Activated naive CD4-positive, alpha-beta T cell treated with anti-CD3 and anti-CD28 coated beads for 36 hours (primary cell): ENCODE measurements at regions of chr6 and their contacts with region 1.

Region 1: DNA sequence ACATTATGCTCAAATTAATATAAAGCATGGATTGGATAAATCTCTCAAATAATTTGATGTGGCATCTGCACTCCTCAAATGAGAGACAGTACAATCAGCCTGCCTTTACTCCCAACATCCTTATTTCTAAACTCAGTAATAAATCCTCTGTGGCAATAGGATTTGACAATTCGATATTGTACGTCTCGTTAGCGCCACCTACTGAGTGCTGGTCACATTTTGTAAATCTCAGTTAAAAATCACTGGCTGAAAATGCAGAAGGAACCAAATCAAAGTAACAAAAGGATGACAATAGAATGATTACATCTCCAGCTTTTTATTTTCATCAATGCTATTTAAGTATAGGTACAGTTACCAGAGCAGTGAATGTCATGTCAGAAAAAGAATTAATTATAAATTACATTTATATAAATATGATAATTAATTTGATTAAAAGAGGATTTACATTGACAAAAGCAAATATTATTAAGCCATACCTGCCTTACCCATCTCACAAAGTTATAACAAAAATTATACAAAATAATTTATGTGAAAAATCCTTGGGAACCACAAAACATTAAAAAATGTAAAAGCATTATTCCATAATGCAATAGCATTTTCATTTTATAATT is 20.2 kb upstream of the GJE1 start:
- DNase-seq: peak; percentile 88
- H3K4me3 Mint-ChIP-seq: no peak overlapping the region
- H3K27ac Mint-ChIP-seq: no peak overlapping the region
- H3K4me1 Mint-ChIP-seq: no peaks in the 10 kb centered on the region
- H3K27me3 Mint-ChIP-seq: peaks cover 3% of the 10 kb centered on the region

Region 2: GRCh38 chr6:141594874-141595273 is 517.7 kb before region 1 on chr6:
- CTCF ChIA-PET with region 1: no interaction called
- intact Hi-C with region 1: loop called (anchors 2 kb)
- DNase-seq: no peak
- H3K4me3 Mint-ChIP-seq: no peak overlapping the region
- H3K27ac Mint-ChIP-seq: no peak overlapping the region
- H3K4me1 Mint-ChIP-seq: no peaks in the 10 kb centered on the region
- H3K27me3 Mint-ChIP-seq: no peaks in the 10 kb centered on the region

Region 3: DNA sequence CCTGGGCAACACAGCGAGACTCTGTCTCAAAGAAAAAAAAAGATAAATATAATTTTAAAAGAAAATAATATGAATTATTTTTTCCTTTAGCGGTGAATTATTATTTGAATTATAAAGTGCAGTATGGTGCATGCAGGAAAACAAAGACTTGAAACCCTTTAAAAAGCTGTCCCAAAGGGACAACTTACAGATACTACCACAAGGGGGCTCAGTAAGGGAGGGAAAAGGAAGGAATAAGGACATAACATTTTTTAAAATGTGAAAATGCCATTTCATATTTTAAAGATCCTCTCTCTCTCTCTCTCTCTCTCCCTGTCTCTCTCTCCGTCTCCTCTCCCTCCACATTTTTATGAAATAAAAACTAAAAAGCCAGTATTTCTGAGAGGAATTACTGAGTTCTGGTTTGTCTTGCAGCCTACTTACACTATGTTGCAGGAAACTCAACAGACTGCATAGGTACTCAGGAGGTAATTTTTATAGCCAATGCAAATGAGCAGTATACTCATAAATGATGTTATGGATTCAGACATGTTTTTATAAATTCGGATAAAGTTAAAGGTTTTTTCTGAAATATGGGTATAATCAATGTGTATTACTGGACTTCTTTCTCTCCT is 434.9 kb before region 1 on chr6:
- CTCF ChIA-PET with region 1: interaction called, 3 read pairs
- intact Hi-C with region 1: loop called (anchors 1 kb)
- DNase-seq: no peak
- H3K4me3 Mint-ChIP-seq: no peak overlapping the region
- H3K27ac Mint-ChIP-seq: no peak overlapping the region
- H3K4me1 Mint-ChIP-seq: no peaks in the 10 kb centered on the region
- H3K27me3 Mint-ChIP-seq: no peaks in the 10 kb centered on the region